Heart right ventricle (tissue), 16 donors: ENCODE measurements at regions of chr18 and their contacts with region 1.

Region 1: DNA sequence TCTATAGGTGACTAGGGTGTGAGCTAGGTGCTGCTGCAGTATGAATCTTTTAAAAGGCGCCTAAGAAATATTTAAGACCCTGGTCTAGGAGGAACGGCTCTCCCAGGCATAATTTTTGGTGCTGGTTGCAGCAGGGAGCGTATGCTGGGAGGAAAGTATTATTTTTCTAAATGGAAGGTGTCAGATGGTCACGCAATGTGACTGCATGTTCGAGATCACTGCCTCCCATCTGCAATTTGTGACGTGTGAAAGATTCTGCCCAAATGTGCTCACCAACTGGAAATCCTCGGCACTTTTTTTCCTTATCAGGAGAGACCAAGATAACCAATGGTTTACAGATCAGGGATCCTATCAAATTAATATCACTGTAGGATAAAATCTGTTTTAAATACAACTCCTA is 95.6 kb upstream of the KLHL14 start:
- DNase-seq: no peak
- ATAC-seq: no peak
- H3K4me3 ChIP-seq: no peak overlapping the region
- H3K27ac ChIP-seq: no peak overlapping the region
- H3K4me1 ChIP-seq: no peaks in the 10 kb centered on the region
- H3K27me3 ChIP-seq: peaks cover 0 to 10% (median 0%) of the 10 kb centered on the region in 7 donors
- CTCF ChIP-seq: no peak

Region 2: GRCh38 chr18:32803568-32803967 is 64.8 kb before region 1 on chr18:
- intact Hi-C with region 1: loop called in 1 of 10 experiments (anchors 10 kb)
- DNase-seq: no peak
- ATAC-seq: no peak
- H3K4me3 ChIP-seq: no peak overlapping the region
- H3K27ac ChIP-seq: no peak overlapping the region
- H3K4me1 ChIP-seq: no peaks in the 10 kb centered on the region
- H3K27me3 ChIP-seq: peaks cover 0 to 14% (median 0%) of the 10 kb centered on the region in 7 donors
- CTCF ChIP-seq: no peak